ENCODE measurements at regions of chrX and their contacts with region 1.

Region 1: DNA sequence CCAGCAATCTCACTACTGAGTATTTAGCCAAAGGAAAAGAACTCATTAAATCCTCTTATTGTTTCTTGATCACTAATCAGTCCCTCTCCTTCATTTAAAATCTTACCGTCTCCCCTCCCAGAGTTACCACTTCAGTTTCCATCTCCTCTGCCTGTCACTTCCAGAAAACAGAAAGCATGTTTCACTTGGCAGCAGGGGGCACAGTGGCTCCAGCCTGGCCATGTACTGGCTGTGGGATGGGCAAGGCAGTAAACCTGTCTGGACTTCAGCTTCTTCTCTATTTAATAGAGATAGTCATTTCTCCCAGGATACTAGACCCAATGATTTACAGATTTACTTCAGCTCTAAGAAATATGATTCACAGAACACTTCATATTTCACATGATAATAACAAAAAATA is 63.2 kb downstream of the CD40LG start:
- DNase-seq: no peak
- H3K4me3 ChIP-seq: no peak overlapping the region
- H3K27ac ChIP-seq: no peak overlapping the region
- H3K27me3 ChIP-seq: no peaks in the 10 kb centered on the region
- CTCF ChIP-seq: peak; percentile 42

Region 2: GRCh38 chrX:136920001-136920400 is 208.9 kb after region 1 on chrX:
- CTCF ChIA-PET with region 1: interaction called, 24 read pairs
- POLR2A ChIA-PET with region 1: no interaction called
- DNase-seq: no peak
- H3K4me3 ChIP-seq: no peak overlapping the region
- H3K27ac ChIP-seq: no peak overlapping the region
- H3K27me3 ChIP-seq: no peaks in the 10 kb centered on the region
- CTCF ChIP-seq: no peak